Breast epithelium (tissue), 4 donors: ENCODE measurements at regions of chr5 and their contacts with region 1.

Region 1: DNA sequence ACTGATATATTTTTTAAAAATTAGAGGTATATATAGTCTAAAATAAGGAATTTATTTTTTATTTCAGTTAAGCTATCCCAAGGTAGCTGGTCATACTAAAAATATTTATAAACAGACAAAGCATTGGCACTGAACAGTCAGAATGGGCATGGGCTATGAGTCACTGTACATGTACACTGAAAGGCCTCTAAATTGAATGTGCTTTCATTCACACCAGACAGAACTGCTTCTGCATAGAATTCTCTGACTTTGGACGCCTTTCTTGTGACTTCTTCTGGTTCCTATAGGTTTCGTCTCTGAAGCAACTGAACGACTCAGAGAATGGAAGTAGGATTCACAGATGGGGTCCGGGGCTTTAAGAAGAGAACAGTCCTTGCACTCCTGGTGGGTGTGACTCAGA is 394.8 kb upstream of the MEF2C start:
- DNase-seq: no peak
- H3K4me3 ChIP-seq: no peak overlapping the region
- H3K27ac ChIP-seq: no peak overlapping the region
- H3K4me1 ChIP-seq: no peaks in the 10 kb centered on the region
- H3K27me3 ChIP-seq: no peaks in the 10 kb centered on the region
- CTCF ChIP-seq: no peak
- POLR2A ChIP-seq: no peak

Region 2: GRCh38 chr5:89211836-89212235 is 66.0 kb before region 1 on chr5:
- intact Hi-C with region 1: loop called (anchors 2 kb)
- DNase-seq: no peak
- H3K4me3 ChIP-seq: no peak overlapping the region
- H3K27ac ChIP-seq: no peak overlapping the region
- H3K4me1 ChIP-seq: no peaks in the 10 kb centered on the region
- H3K27me3 ChIP-seq: no peaks in the 10 kb centered on the region
- CTCF ChIP-seq: no peak
- POLR2A ChIP-seq: no peak

Region 3: GRCh38 chr5:89255845-89256463 is 21.9 kb before region 1 on chr5:
- intact Hi-C with region 1: loop called (anchors 2 kb)
- DNase-seq: no peak
- H3K4me3 ChIP-seq: no peak overlapping the region
- H3K27ac ChIP-seq: no peak overlapping the region
- H3K4me1 ChIP-seq: no peaks in the 10 kb centered on the region
- H3K27me3 ChIP-seq: no peaks in the 10 kb centered on the region
- CTCF ChIP-seq: no peak
- POLR2A ChIP-seq: no peak